ENCODE measurements at regions of chr5 and their contacts with region 1.

Region 1: GRCh38 chr5:57650360-57651069 is 167.9 kb upstream of the ACTBL2 start:
- DNase-seq: peak; percentile 49
- ATAC-seq: peak; percentile 96
- H3K4me3 Mint-ChIP-seq: no peak overlapping the region
- H3K27ac Mint-ChIP-seq: peak overlapping the region; percentile 82; the same call in 1 of the 2 replicates
- H3K4me1 Mint-ChIP-seq: peaks cover 19% of the 10 kb centered on the region
- H3K27me3 Mint-ChIP-seq: no peaks in the 10 kb centered on the region
- CTCF ChIP-seq: peak; percentile 60

Region 2: DNA sequence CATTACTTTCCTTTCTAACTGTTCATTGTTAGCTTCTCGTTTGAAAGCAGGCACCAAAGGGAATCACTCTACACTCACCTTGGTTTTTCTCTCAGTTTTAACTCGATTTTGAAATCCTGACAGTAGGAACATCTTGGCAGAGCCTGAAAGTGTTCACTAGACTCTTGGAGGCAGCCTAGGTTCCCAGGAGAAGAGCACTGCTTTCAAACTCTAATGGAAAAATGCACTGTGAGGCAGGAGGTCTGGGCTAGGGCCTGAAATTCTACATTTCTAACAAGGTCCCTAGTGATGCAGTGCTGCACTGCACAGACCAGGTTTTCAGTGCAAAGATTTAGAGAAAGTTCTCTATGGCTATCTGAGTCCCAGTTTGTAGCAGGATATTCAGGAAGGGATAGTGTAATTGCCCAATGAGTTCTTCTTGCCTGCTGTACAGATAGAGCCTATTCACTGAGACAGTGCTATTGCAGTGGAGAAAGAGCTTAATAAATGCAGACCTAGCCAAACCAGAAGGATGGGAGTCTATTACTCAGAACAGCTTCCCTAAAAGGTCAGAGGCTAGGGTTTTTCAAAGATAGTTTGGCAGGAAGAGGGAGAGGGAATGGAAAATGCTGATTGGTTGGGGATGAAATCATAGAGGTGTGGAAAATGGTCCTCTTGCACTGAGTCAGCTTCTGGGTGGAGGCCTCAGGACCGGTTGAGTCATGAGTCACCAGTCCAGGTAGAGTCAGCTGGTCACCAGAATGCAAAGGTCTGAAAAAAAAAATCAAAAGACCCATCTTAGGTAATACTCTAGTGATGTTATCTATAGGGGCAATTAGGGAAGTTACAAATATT is 322.7 kb before region 1 on chr5:
- CTCF ChIA-PET with region 1: no interaction called
- POLR2A ChIA-PET with region 1: no interaction called
- DNase-seq: no peak
- ATAC-seq: no peak
- H3K4me3 Mint-ChIP-seq: no peak overlapping the region
- H3K27ac Mint-ChIP-seq: no peak overlapping the region
- H3K4me1 Mint-ChIP-seq: 0 out of 2 replicates have a peak, but pooled peaks cover 8% of the 10 kb centered on the region
- H3K27me3 Mint-ChIP-seq: no peaks in the 10 kb centered on the region; the same call in 1 of the 2 replicates
- CTCF ChIP-seq: no peak

Region 3: GRCh38 chr5:57594436-57594835 is 56.1 kb before region 1 on chr5:
- CTCF ChIA-PET with region 1: interaction called, 10 read pairs
- POLR2A ChIA-PET with region 1: no interaction called
- DNase-seq: no peak
- ATAC-seq: no peak
- H3K4me3 Mint-ChIP-seq: no peak overlapping the region
- H3K27ac Mint-ChIP-seq: no peak overlapping the region
- H3K4me1 Mint-ChIP-seq: peaks cover 4% of the 10 kb centered on the region
- H3K27me3 Mint-ChIP-seq: no peaks in the 10 kb centered on the region
- CTCF ChIP-seq: no peak

Region 4: GRCh38 chr5:57662991-57663390 is 12.5 kb after region 1 on chr5:
- CTCF ChIA-PET with region 1: interaction called, 18 read pairs
- POLR2A ChIA-PET with region 1: no interaction called
- DNase-seq: no peak
- ATAC-seq: no peak
- H3K4me3 Mint-ChIP-seq: no peak overlapping the region
- H3K27ac Mint-ChIP-seq: no peak overlapping the region
- H3K4me1 Mint-ChIP-seq: peaks cover 5% of the 10 kb centered on the region; the same call in 1 of the 2 replicates
- H3K27me3 Mint-ChIP-seq: no peaks in the 10 kb centered on the region
- CTCF ChIP-seq: no peak

Region 5: DNA sequence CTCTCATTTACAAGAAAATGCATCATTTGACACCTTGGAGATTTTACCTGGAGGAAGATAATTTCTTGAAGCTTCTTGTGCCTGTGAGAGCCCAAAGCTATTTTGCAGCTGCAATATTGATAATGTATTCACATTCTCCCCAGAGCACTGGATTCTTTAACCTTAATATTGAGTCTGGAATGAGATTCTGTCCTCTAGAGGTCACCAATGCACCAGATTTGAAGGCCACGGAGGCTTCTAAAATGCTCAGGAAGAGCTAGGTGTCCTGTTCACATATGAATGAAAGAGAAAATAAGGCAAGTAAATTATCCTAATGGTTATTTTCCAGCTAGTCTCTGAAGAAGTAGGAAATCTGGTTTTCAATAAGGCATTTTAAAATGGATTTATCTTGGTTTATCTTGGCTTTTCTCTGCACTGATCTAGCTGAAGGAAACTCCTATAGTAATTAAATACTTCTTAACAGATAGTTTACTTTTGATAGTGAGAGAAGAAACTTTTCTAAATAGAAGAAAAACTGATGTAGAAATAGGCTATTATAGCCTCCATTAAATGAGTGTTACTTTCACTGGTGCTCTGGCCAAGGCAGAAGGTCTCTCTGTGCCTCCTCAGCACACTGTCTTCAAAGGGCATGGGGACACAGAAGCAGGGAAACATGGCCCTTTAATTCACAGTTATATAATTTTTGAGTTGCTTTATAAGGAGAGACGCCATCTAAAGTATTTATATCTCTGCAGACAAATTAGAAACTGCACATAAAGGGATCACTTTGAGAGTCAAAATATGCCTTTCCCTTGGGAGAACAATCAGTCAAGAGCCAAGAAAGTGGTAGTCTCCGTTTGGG is 129.1 kb after region 1 on chr5:
- CTCF ChIA-PET with region 1: interaction called, 12 read pairs
- POLR2A ChIA-PET with region 1: no interaction called
- DNase-seq: peak; percentile 32
- ATAC-seq: peak; percentile 84
- H3K4me3 Mint-ChIP-seq: no peak overlapping the region
- H3K27ac Mint-ChIP-seq: no peak overlapping the region
- H3K4me1 Mint-ChIP-seq: peaks cover 18% of the 10 kb centered on the region
- H3K27me3 Mint-ChIP-seq: no peaks in the 10 kb centered on the region
- CTCF ChIP-seq: peak; percentile 45; the same call in 1 of the 2 replicates

Region 6: DNA sequence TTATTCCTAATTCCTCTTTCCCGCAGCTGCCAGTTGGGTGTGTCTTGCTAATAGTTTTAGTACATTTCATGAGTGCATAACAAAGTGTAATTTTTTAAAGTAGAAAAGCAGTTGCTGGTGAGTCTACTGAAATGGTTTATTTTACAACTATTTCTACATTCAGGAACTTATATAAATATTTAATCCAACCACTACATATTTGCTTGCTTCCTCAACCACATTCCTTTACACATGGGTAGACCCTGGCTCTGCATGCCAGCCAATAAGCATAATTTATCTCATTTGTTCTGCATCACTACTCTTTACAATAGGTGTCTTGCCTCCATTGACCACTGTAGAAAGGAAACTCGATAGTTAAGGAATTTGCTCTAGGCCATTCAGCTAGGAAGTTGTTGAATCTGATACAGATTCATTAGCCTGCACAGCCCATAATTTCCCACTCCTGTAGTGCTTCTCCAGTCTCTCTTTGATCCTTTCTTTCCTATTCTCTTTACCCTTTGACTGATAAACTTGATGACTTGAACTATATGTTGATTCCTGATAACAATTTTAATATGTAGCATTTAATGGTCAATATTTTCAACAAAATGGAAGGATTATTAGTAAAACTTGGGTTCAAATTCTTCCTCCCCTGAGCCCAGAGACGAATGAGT is 174.6 kb after region 1 on chr5:
- CTCF ChIA-PET with region 1: no interaction called
- POLR2A ChIA-PET with region 1: no interaction called
- DNase-seq: no peak
- ATAC-seq: no peak; the same call in 1 of the 2 replicates
- H3K4me3 Mint-ChIP-seq: no peak overlapping the region
- H3K27ac Mint-ChIP-seq: no peak overlapping the region
- H3K4me1 Mint-ChIP-seq: peaks cover 6% of the 10 kb centered on the region
- H3K27me3 Mint-ChIP-seq: no peaks in the 10 kb centered on the region
- CTCF ChIP-seq: no peak

Region 7: DNA sequence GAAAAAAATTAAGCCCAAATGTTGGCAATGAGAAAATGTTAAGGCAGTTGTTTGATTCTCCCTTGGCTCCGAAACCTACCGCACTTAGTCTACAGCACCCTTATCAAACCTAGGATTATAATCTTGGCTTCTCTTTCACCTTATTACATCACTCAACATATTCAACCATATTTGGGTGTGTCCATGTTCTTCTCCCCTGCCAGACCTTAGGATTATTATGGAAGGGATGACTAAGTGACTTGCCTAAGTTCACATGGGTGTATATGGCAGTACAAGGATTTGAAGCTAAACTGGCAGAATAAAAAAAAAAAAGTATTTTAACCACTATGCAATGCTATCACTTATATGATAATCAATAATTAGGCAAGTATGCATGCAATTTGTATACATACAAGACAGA is 732.9 kb after region 1 on chr5:
- CTCF ChIA-PET with region 1: no interaction called
- POLR2A ChIA-PET with region 1: no interaction called
- DNase-seq: no peak
- ATAC-seq: no peak
- H3K4me3 Mint-ChIP-seq: no peak overlapping the region
- H3K27ac Mint-ChIP-seq: no peak overlapping the region
- H3K4me1 Mint-ChIP-seq: no peaks in the 10 kb centered on the region
- H3K27me3 Mint-ChIP-seq: no peaks in the 10 kb centered on the region; the same call in 1 of the 2 replicates
- CTCF ChIP-seq: no peak